AG04449 (cell line): ENCODE measurements at regions of chr3 and their contacts with region 1.

Region 1: GRCh38 chr3:12557473-12558108 is 704 bp downstream of the MKRN2 start:
- DNase-seq: no peak
- H3K4me3 ChIP-seq: peak overlapping the region; percentile 93
- CTCF ChIP-seq: no peak

Region 2: GRCh38 chr3:12574131-12574530 is 16.5 kb after region 1 on chr3:
- CTCF ChIA-PET with region 1: interaction called, 13 read pairs
- POLR2A ChIA-PET with region 1: no interaction called
- DNase-seq: no peak
- H3K4me3 ChIP-seq: no peak overlapping the region
- CTCF ChIP-seq: no peak

Region 3: GRCh38 chr3:12719984-12720898 is 162.7 kb after region 1 on chr3:
- CTCF ChIA-PET with region 1: interaction called, 15 read pairs
- POLR2A ChIA-PET with region 1: no interaction called
- DNase-seq: no peak
- H3K4me3 ChIP-seq: peak overlapping the region; percentile 47
- CTCF ChIP-seq: peak; percentile 80